Mammary epithelial cell (primary cell): ENCODE measurements at regions of chr13 and their contacts with region 1.

Region 1: DNA sequence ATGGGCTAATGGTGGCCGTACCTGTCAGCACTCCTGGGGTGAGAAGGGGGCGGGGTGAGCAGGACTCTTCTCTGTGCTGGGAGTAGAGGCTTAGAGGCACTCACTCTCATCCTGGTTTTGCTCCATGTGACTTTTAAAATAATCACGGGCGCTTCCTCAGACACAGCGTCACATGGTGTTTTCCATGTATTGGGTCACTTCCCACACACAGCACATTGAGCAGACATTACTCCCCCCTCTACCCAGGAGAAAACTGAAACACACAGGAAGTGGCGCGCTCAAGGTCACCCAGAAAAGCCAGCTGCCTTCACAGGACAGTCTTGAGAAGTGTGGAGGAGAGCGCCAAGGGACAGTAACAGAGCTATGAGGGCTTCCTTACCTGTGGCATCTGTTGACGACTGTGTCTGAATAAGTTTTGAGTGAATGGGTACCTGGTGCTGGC is 23.2 kb downstream of the SPATA13 start:
- DNase-seq: no peak
- H3K4me3 ChIP-seq: no peak overlapping the region
- H3K27ac ChIP-seq: no peak overlapping the region
- H3K4me1 ChIP-seq: no peaks in the 10 kb centered on the region
- H3K27me3 ChIP-seq: no peaks in the 10 kb centered on the region
- CTCF ChIP-seq: no peak

Region 2: GRCh38 chr13:24270639-24271141 is 86.9 kb after region 1 on chr13:
- CTCF ChIA-PET with region 1: no interaction called
- dilution Hi-C with region 1: loop called (anchors 5 kb)
- in situ Hi-C with region 1: no loop called
- intact Hi-C with region 1: no loop called
- DNase-seq: peak; percentile 28
- H3K4me3 ChIP-seq: no peak overlapping the region
- H3K27ac ChIP-seq: no peak overlapping the region
- H3K4me1 ChIP-seq: no peaks in the 10 kb centered on the region
- H3K27me3 ChIP-seq: no peaks in the 10 kb centered on the region
- CTCF ChIP-seq: no peak